ENCODE measurements at regions of chr22 and their contacts with region 1.

Region 1: DNA sequence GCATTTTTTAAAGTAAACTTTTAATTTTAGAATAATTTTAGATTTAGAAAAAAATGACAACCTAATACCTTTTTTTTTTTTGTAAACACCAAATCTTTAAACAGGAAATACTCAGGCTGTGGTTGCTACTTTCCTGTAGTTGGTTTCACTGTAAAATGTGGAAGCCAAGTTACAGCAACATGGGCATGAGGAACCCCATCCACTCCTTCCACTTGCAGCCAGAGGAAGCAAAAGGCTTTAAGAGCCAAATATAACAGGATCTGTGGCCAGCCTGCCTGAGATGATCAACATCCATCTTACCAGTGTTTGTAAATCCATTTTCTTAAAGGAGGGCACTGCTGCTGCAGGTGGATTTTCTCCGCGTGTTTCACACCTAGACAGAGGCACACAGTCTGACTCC is 66.2 kb downstream of the TNRC6B start:
- DNase-seq: peak in 5 of 9 donors; percentile 23 to 45 (median 37)
- ATAC-seq: no peak
- H3K4me3 ChIP-seq: no peak overlapping the region
- H3K4me3 Mint-ChIP-seq: peak overlapping the region; percentile 52 to 81 (median 64)
- H3K27ac ChIP-seq: no peak overlapping the region
- H3K27ac Mint-ChIP-seq: peak overlapping the region; percentile 40 to 91 (median 81)
- H3K4me1 ChIP-seq: peaks cover 61 to 71% of the 10 kb centered on the region in 2 donors
- H3K4me1 Mint-ChIP-seq: peaks cover 64 to 96% (median 89%) of the 10 kb centered on the region in 7 donors
- H3K27me3 ChIP-seq: no peaks in the 10 kb centered on the region
- H3K27me3 Mint-ChIP-seq: no peaks in the 10 kb centered on the region

Region 2: GRCh38 chr22:40203572-40203971 is 40.3 kb before region 1 on chr22:
- CTCF ChIA-PET with region 1: no interaction called
- POLR2A ChIA-PET with region 1: no interaction called
- intact Hi-C with region 1: loop called in 1 of 2 experiments (anchors 5 kb)
- DNase-seq: peak in 7 of 9 donors; percentile 46 to 72 (median 60)
- ATAC-seq: peak; percentile 93
- H3K4me3 ChIP-seq: peak overlapping the region; percentile 5
- H3K4me3 Mint-ChIP-seq: peak overlapping the region; percentile 60 to 73 (median 66)
- H3K27ac ChIP-seq: peak overlapping the region; percentile 54
- H3K27ac Mint-ChIP-seq: peak overlapping the region; percentile 74 to 95 (median 85)
- H3K4me1 ChIP-seq: peaks cover 24 to 49% of the 10 kb centered on the region in 2 donors
- H3K4me1 Mint-ChIP-seq: peaks cover 50 to 88% (median 79%) of the 10 kb centered on the region in 7 donors
- H3K27me3 ChIP-seq: no peaks in the 10 kb centered on the region
- H3K27me3 Mint-ChIP-seq: no peaks in the 10 kb centered on the region

Region 3: DNA sequence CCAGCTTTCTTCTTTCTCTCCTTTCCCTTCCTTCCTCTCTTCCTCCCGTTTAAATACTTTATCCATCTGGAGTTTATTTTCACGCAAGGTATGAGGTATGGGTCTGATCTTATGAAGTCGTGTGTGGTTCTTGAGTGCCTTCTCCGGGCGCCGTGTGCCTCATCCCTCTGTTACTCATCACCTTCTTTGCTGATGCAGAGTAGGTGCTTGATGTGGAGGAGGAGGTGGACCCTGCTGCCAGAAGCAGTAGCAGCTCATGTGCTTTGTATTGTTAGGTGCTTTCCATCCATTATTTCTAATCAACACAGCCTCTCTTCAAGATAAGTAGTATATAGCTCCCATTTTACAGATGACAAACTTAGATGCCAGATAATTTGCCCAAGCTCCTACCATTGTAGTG is 19.2 kb before region 1 on chr22:
- CTCF ChIA-PET with region 1: interaction called, 4 read pairs
- POLR2A ChIA-PET with region 1: interaction called, 4 read pairs
- intact Hi-C with region 1: loop called in 1 of 2 experiments (anchors 2 kb)
- DNase-seq: peak in 2 of 9 donors; percentile 40 to 63
- ATAC-seq: peak; percentile 89
- H3K4me3 ChIP-seq: no peak overlapping the region
- H3K4me3 Mint-ChIP-seq: peak overlapping the region; percentile 23 to 79 (median 62)
- H3K27ac ChIP-seq: no peak overlapping the region
- H3K27ac Mint-ChIP-seq: peak overlapping the region; percentile 24 to 92 (median 69)
- H3K4me1 ChIP-seq: peaks cover 6 to 41% of the 10 kb centered on the region in 2 donors
- H3K4me1 Mint-ChIP-seq: peaks cover 47 to 80% (median 68%) of the 10 kb centered on the region in 7 donors
- H3K27me3 ChIP-seq: no peaks in the 10 kb centered on the region
- H3K27me3 Mint-ChIP-seq: no peaks in the 10 kb centered on the region

Region 4: GRCh38 chr22:40276996-40277823 is 33.3 kb after region 1 on chr22:
- CTCF ChIA-PET with region 1: no interaction called
- POLR2A ChIA-PET with region 1: no interaction called
- intact Hi-C with region 1: loop called in 1 of 2 experiments (anchors 5 kb)
- DNase-seq: no peak
- ATAC-seq: no peak
- H3K4me3 ChIP-seq: peak overlapping the region; percentile 40
- H3K4me3 Mint-ChIP-seq: peak overlapping the region in 6 of 10 donors; percentile 1 to 88 (median 64)
- H3K27ac ChIP-seq: peak overlapping the region; percentile 82
- H3K27ac Mint-ChIP-seq: peak overlapping the region; percentile 57 to 97 (median 89)
- H3K4me1 ChIP-seq: peaks cover 0 to 35% of the 10 kb centered on the region in 2 donors
- H3K4me1 Mint-ChIP-seq: peaks cover 23 to 89% (median 69%) of the 10 kb centered on the region in 7 donors
- H3K27me3 ChIP-seq: no peaks in the 10 kb centered on the region
- H3K27me3 Mint-ChIP-seq: no peaks in the 10 kb centered on the region